ENCODE measurements at regions of chr21 and their contacts with region 1.

Region 1: GRCh38 chr21:34693192-34693810 is 24.5 kb downstream of the CLIC6 start:
- DNase-seq: peak; percentile 34 to 57 (median 55)
- H3K4me3 ChIP-seq: no peak overlapping the region
- H3K4me3 Mint-ChIP-seq: no peak overlapping the region
- H3K27ac ChIP-seq: no peak overlapping the region
- H3K27ac Mint-ChIP-seq: no peak overlapping the region
- H3K4me1 ChIP-seq: no peaks in the 10 kb centered on the region
- H3K4me1 Mint-ChIP-seq: no peaks in the 10 kb centered on the region
- H3K27me3 ChIP-seq: peaks cover 3 to 6% of the 10 kb centered on the region in 2 donors
- H3K27me3 Mint-ChIP-seq: peaks cover 5 to 12% (median 10%) of the 10 kb centered on the region in 3 donors
- CTCF ChIP-seq: peak; percentile 94

Region 2: GRCh38 chr21:34614633-34615486 is 78.4 kb before region 1 on chr21 and contains the start of gene RCAN1:
- intact Hi-C with region 1: no loop called
- DNase-seq: peak; percentile 93 to 96 (median 94)
- H3K4me3 ChIP-seq: peak within 1 kb of the TSS; percentile 50 to 86 (median 78)
- H3K4me3 Mint-ChIP-seq: peak within 1 kb of the TSS; percentile 85 to 90
- H3K27ac ChIP-seq: peak within 1 kb of the TSS in 1 of 2 donors; percentile 81
- H3K27ac Mint-ChIP-seq: peak within 1 kb of the TSS; percentile 63 to 89 (median 82)
- H3K4me1 ChIP-seq: peaks cover 41 to 57% of the 10 kb centered on the region in 2 donors
- H3K4me1 Mint-ChIP-seq: peaks cover 54% of the 10 kb centered on the region
- H3K27me3 ChIP-seq: no peaks in the 10 kb centered on the region
- H3K27me3 Mint-ChIP-seq: peaks cover 0 to 3% (median 1%) of the 10 kb centered on the region in 3 donors
- CTCF ChIP-seq: no peak
- polyA plus RNA-seq, gene RCAN1: 5.2 to 17.5 (median 15.1) TPM

Region 3: DNA sequence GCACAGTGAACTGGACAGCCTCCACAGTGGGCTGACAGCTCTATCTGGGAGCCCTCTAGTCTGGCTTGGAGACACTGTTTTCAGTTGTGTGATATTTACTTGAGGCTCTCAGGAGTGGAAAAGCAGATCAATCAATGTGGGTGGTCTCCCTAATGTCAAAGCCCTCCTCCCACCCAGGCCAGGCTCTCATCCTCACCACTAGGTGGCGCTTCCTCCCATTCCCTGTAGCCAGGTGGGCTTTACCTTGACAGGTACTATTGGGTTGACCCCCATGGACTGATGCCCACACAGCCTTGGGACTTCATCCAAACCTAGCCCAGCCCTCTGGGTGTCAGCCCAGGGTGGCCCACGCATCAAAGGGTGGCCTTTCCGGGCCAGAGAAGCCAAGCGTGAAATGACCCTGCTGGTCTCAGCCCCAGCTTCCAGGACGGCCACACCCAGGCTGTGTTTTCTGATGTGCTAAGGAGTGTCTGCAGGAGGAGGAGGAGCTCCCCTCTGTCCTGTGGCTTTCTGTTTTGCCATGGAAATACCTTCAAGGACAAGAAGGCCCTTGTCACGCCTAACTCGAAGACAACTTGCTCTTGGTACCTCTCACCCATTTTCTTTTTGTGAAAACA is 29.5 kb after region 1 on chr21:
- intact Hi-C with region 1: no loop called
- DNase-seq: peak in 1 of 3 donors; percentile 14
- H3K4me3 ChIP-seq: no peak overlapping the region
- H3K4me3 Mint-ChIP-seq: no peak overlapping the region
- H3K27ac ChIP-seq: no peak overlapping the region
- H3K27ac Mint-ChIP-seq: no peak overlapping the region
- H3K4me1 ChIP-seq: no peaks in the 10 kb centered on the region
- H3K4me1 Mint-ChIP-seq: peaks cover 1% of the 10 kb centered on the region
- H3K27me3 ChIP-seq: no peaks in the 10 kb centered on the region
- H3K27me3 Mint-ChIP-seq: peaks cover 8 to 11% (median 8%) of the 10 kb centered on the region in 3 donors
- CTCF ChIP-seq: peak; percentile 87

Region 4: GRCh38 chr21:35011681-35012080 is 318.4 kb after region 1 on chr21:
- intact Hi-C with region 1: no loop called
- DNase-seq: no peak
- H3K4me3 ChIP-seq: no peak overlapping the region
- H3K4me3 Mint-ChIP-seq: no peak overlapping the region
- H3K27ac ChIP-seq: no peak overlapping the region
- H3K27ac Mint-ChIP-seq: peak overlapping the region in 1 of 7 donors; percentile 51
- H3K4me1 ChIP-seq: peaks cover 10 to 37% of the 10 kb centered on the region in 2 donors
- H3K4me1 Mint-ChIP-seq: peaks cover 50% of the 10 kb centered on the region
- H3K27me3 ChIP-seq: no peaks in the 10 kb centered on the region
- H3K27me3 Mint-ChIP-seq: peaks cover 0 to 1% (median 0%) of the 10 kb centered on the region in 3 donors
- CTCF ChIP-seq: no peak

Region 5: GRCh38 chr21:36028127-36029069 is 1335.1 kb after region 1 on chr21:
- intact Hi-C with region 1: loop called in 1 of 2 experiments (anchors 2 kb)
- DNase-seq: peak; percentile 49 to 66 (median 52)
- H3K4me3 ChIP-seq: no peak overlapping the region
- H3K4me3 Mint-ChIP-seq: no peak overlapping the region
- H3K27ac ChIP-seq: no peak overlapping the region
- H3K27ac Mint-ChIP-seq: peak overlapping the region in 2 of 7 donors; percentile 10 to 12
- H3K4me1 ChIP-seq: no peaks in the 10 kb centered on the region
- H3K4me1 Mint-ChIP-seq: peaks cover 5% of the 10 kb centered on the region
- H3K27me3 ChIP-seq: no peaks in the 10 kb centered on the region
- H3K27me3 Mint-ChIP-seq: peaks cover 0 to 7% (median 7%) of the 10 kb centered on the region in 3 donors
- CTCF ChIP-seq: peak; percentile 92

Measured in CD14-positive monocyte (primary cell).